Activated CD4-positive, alpha-beta T cell treated with anti-CD3 and anti-CD28 coated beads, Interleukin-2, amount 10 ng/mL, durations not matched to agents 24 days and 14 days (primary cell): ENCODE measurements at regions of chr7 and their contacts with region 1.

Region 1: DNA sequence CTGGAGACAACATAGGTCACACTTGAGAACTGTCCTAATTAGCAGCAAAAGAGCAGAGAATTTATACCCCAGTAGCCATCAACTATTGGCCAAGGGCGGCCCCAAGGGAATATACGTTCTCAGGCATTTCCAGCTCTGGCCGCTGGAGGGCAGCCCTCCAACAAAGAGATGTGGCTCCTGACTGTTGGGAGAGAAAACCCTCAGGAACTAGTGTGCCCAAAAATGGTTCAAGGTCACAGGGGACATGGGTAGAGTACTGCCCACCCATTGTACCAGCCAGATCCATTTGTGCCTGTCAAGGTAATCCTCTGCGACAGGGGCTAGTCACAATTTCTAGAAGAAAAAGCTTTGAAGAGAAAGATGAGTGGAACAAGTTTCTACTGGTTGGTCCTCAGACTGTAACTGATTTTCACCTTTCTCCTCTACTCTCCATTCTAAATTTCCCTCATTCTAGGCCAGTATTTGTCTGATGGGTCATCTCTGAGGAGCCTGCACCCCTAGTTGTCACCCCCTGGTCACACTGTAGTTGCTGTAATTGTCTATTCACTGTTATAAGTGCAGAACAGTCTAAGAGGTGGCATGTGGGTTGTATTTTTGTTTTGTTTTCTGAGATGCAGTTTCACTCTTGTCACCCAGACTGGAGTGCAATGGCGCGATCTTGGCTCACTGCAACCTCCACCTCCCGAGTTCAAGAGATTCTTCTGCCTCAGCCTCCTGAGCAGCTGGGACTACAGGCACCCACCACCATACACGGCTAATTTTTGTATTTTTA is 14.7 kb upstream of the C7orf33 start:
- DNase-seq: peak; percentile 92
- H3K4me3 Mint-ChIP-seq: no peak overlapping the region
- H3K27ac Mint-ChIP-seq: peak overlapping the region; percentile 29
- H3K4me1 Mint-ChIP-seq: peaks cover 15% of the 10 kb centered on the region
- H3K27me3 Mint-ChIP-seq: peaks cover 12% of the 10 kb centered on the region

Region 2: DNA sequence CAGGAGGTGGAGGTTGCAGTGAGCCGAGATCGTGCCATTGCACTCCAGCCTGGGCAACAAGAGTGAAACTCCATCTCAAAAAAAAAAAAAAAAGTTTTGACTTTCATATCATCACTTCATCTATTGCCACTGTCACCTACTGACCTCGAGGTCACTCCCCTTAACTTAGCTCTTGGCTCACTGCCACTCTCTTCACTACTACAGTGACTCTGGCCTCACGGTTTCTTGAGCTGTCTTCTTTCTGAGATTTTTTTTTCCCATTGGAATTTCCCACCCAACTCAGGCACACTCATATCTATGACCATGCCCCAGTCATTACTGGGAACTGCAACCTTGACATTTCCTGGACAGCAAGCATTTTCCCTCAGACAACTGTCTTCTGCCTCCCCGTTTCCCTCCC is 27.9 kb before region 1 on chr7:
- intact Hi-C with region 1: no loop called
- DNase-seq: no peak
- H3K4me3 Mint-ChIP-seq: no peak overlapping the region
- H3K27ac Mint-ChIP-seq: no peak overlapping the region
- H3K4me1 Mint-ChIP-seq: peaks cover 5% of the 10 kb centered on the region
- H3K27me3 Mint-ChIP-seq: peaks cover 7% of the 10 kb centered on the region

Region 3: GRCh38 chr7:148563583-148564274 is 12.1 kb before region 1 on chr7:
- intact Hi-C with region 1: loop called (anchors 1 kb)
- DNase-seq: no peak
- H3K4me3 Mint-ChIP-seq: peak overlapping the region; percentile 49
- H3K27ac Mint-ChIP-seq: peak overlapping the region; percentile 89
- H3K4me1 Mint-ChIP-seq: peaks cover 29% of the 10 kb centered on the region
- H3K27me3 Mint-ChIP-seq: peaks cover 4% of the 10 kb centered on the region

Region 4: GRCh38 chr7:148687555-148687954 is 111.7 kb after region 1 on chr7:
- intact Hi-C with region 1: no loop called
- DNase-seq: no peak
- H3K4me3 Mint-ChIP-seq: no peak overlapping the region
- H3K27ac Mint-ChIP-seq: no peak overlapping the region
- H3K4me1 Mint-ChIP-seq: no peaks in the 10 kb centered on the region
- H3K27me3 Mint-ChIP-seq: peaks cover 1% of the 10 kb centered on the region

Region 5: DNA sequence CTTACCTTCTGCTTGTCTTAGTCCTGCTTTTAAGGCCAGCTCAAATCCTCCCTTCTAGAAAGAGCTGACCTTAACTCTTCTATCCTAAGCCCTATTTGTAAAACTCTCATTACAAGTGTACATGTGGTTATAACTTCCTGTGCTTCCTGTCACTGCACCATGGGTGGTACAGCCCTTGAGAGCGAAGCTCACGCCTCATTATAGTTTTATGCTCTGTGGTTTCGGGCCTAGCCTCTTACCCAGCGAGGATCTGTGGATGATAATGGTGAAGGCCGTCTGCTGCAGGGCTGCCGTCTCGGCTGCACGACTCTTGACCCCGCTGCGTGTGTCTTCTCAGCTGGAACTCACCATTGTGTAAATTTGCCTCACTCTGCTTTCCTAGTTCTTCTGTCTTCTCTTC is 197.5 kb after region 1 on chr7:
- intact Hi-C with region 1: loop called (anchors 10 kb)
- DNase-seq: peak; percentile 80
- H3K4me3 Mint-ChIP-seq: peak overlapping the region; percentile 16
- H3K27ac Mint-ChIP-seq: peak overlapping the region; percentile 61
- H3K4me1 Mint-ChIP-seq: peaks cover 19% of the 10 kb centered on the region
- H3K27me3 Mint-ChIP-seq: no peaks in the 10 kb centered on the region